ENCODE measurements at regions of chr6 and their contacts with region 1.

Region 1: DNA sequence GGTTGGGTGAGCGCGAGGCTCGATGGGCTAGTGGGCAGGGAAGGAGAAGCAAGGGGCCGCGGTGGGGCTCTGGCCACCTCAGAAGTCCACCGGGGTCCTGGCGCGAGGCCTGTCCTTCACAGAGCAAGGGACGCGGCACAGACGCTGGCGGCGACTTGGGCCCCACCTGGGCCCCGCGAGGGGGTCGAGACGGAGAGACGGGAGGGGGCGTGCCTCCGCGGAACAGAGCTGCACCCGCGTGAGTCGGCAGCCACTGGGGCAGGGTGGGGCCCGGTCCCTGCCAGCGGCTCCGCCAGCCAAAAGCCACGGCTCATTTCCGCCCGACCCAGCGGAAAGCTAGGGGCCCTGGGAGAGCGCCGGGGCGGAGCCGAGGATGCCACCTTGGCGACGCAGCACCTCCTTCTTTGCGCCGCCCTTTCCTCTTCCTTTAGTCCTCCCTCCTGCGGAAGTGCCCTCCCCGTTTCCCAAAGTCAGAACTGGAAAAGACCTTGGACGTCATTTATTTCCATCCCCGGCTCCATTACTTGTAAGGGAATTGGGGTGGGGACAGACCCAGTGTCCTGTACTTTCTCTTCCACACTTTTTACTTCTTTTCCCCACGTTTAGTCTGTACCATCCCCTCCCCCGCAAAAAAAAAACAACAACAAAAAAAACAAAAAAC is at the start of gene CUL7:
- DNase-seq: peak; percentile 95
- ATAC-seq: peak; percentile 95
- total RNA-seq, gene CUL7: 7.3 TPM

Region 2: GRCh38 chr6:42269553-42269952 is 784.1 kb before region 1 on chr6:
- intact Hi-C with region 1: no loop called
- DNase-seq: no peak
- ATAC-seq: no peak

Region 3: GRCh38 chr6:43035495-43036194 is 18.0 kb before region 1 on chr6:
- intact Hi-C with region 1: loop called (anchors 2 kb)
- DNase-seq: no peak
- ATAC-seq: peak; percentile 93

Region 4: DNA sequence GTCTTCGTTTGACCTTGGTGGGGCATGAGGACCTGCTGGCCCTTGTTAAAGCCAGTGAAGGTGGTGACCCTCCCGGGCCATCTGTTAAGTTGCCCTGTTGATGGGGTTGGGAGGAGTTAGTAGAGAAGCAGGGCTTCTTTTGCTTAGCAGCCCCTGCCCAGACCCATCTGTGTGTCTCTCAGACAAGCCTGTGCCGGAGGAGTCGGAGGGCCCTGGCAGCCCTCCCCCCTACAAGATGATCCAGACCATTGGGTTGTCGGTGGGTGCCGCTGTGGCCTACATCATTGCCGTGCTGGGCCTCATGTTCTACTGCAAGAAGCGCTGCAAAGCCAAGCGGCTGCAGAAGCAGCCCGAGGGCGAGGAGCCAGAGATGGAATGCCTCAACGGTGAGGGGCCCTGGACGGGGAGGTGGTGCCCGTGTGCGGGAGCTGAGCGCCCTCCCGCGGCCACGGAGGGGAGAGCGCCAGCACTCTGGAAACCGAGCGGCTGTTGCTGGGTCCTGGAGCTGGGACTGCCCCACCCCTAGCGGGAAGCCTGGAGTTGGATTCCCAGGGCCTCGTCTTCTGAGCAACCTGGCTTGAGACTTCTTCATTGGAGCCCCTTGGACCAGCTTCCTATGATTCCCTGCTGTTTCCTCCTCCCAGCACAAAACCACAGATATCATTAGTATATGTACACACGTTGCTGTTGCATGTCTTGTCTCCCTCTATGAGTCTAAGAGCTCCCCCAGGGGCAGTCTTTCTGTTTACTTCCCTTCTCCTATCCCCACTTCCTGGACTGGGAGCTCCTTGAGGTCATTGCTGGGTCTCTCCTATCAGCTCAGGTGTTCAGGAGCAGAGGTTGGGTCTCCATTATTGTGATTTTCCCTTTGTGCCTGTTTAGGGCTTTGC is 89.8 kb after region 1 on chr6:
- intact Hi-C with region 1: loop called (anchors 5 kb)
- DNase-seq: peak; percentile 90
- ATAC-seq: peak; percentile 97

Region 5: DNA sequence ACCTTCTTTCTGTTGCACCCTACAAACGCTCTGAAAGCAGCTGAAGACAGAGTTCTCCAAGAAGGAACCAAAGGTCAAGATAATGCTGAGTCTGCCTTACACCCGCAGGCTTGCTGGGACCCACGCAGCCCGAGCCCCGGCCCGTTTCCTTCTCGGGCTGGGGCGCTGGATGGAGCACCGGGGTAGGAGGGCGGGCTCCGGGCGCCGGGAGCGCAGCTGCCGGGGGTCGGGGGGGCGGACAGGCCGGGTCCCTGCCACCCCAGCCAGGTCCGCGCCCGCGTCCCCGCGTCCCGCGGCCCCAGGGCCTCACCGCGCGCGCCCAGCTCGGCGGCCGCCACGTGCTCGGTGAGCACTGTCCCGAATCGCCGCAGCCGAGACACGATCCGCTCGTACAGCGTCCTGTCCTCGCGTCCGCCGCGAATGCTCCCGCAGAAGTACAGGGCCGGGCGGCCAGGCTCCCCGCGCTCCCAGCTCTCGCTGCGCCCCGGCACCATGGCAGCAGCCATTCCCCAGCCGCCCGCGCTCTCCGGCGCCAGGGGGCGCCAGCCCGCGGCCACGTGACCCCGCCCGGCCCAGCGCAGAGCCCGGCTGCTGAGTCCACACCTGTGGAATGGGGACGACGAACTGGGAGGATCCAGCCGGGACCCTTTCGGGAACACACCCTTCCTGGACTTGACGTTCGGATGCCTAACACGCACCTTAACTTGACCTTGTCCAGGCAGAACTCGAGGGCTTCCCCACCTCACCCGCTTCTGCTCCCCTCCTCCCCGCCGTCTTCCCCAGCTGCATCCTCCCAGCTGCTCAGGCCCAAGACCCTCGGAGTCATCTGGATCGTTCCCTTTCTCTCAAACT is 175.5 kb after region 1 on chr6 and contains the start of gene DNPH1:
- intact Hi-C with region 1: no loop called
- DNase-seq: peak; percentile 89
- ATAC-seq: peak; percentile 97
- total RNA-seq, gene DNPH1: 29.9 TPM

Measured in Right ventricle myocardium inferior (tissue), 1 donor.